Calu3 (cell line): ENCODE measurements at regions of chr4 and their contacts with region 1.

Region 1: DNA sequence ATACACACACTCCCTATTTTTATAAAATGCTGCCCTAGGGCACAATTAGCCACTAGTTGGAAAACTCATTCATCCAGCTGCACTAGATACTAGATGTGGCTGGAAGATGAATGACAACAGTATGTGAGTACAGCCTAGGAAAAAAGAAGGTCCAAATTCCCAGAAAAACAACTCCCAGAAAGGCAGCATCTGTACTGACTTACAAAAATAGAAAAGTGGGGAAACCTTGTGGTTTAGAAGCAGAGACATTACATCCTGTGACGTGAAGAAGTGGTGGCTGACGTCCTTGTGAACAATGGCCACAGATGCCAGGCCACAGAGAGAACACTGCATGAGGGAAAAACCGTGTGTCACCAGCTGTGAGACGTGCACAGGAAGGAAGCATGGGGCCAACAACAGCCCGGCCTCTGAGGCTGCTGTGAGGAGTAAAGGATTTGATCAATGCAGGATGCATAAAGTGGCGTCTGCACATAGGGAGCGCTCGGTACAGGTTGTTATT is 81.2 kb downstream of the SPRY1 start:
- DNase-seq: no peak
- H3K4me3 Mint-ChIP-seq: no peak overlapping the region
- H3K27ac Mint-ChIP-seq: no peak overlapping the region
- H3K4me1 Mint-ChIP-seq: peaks cover 37% of the 10 kb centered on the region
- H3K27me3 Mint-ChIP-seq: no peaks in the 10 kb centered on the region
- CTCF ChIP-seq: no peak

Region 2: GRCh38 chr4:123555233-123555806 is 77.6 kb after region 1 on chr4:
- CTCF ChIA-PET with region 1: interaction called, 4 read pairs
- intact Hi-C with region 1: loop called (anchors 2 kb)
- DNase-seq: peak; percentile 88
- H3K4me3 Mint-ChIP-seq: peak overlapping the region; percentile 55
- H3K27ac Mint-ChIP-seq: peak overlapping the region; percentile 90
- H3K4me1 Mint-ChIP-seq: peaks cover 67% of the 10 kb centered on the region
- H3K27me3 Mint-ChIP-seq: no peaks in the 10 kb centered on the region
- CTCF ChIP-seq: no peak